ENCODE measurements at regions of chr2 and their contacts with region 1.

Region 1: DNA sequence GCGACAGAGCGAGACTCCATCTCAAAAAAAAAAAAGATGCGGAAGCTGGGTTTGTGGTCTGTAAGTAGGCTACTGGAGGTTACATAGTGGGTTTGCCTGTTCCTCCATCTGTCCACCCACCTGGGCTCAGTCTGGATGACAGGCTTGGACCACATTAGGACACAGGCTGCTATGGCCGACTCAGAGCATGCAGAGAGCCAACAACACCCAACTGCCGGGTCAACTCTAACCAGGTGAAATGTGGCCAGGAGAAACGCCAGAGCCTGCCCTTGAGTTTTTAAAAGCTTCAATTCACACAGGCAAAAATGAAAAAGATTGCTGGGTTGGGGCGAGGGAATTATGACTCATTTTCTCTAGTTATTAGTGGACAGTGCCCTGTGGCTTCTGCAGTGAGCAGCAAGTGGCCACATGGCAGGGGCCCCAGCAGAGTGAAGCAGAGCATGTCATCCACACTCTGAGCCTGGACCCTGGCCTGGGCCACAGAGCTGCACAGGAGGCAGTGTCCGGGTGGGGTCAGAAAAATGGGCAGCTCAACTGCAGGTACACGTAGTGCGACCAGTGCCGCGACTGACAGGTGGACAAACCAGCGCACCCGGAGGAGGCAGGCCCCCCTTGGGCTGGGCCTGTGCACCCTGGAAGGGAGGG is 67.4 kb downstream of the BIN1 start:
- DNase-seq: no peak
- H3K4me3 ChIP-seq: no peak overlapping the region
- H3K27ac ChIP-seq: no peak overlapping the region
- H3K4me1 ChIP-seq: no peaks in the 10 kb centered on the region
- H3K27me3 ChIP-seq: no peaks in the 10 kb centered on the region
- CTCF ChIP-seq: no peak

Region 2: DNA sequence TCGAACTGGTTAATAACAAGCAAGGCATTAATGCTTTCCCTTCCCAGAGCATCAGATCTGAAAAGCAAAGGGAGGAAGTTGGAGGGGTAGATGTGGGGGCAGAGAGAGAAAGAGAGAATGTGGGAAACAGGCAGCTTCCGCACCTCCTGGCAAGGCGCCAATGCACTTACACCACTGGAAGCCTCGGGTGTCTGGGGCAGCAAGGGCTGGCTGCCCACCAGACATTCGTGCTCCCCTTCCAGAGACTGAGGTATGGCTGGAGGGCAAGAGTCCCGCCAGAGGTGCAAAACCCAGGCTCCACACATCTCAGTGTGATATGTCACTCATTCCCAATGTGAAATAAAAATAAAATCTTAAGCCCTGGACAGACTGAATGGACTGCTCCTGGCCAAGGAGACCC is 94.4 kb before region 1 on chr2:
- CTCF ChIA-PET with region 1: no interaction called
- dilution Hi-C with region 1: no loop called
- in situ Hi-C with region 1: no loop called
- intact Hi-C with region 1: no loop called
- DNase-seq: no peak
- H3K4me3 ChIP-seq: no peak overlapping the region
- H3K27ac ChIP-seq: no peak overlapping the region
- H3K4me1 ChIP-seq: no peaks in the 10 kb centered on the region
- H3K27me3 ChIP-seq: no peaks in the 10 kb centered on the region
- CTCF ChIP-seq: no peak

Region 3: GRCh38 chr2:126986631-126987187 is 52.8 kb before region 1 on chr2:
- CTCF ChIA-PET with region 1: no interaction called
- dilution Hi-C with region 1: loop called (anchors 5 kb)
- in situ Hi-C with region 1: no loop called
- intact Hi-C with region 1: no loop called
- DNase-seq: no peak
- H3K4me3 ChIP-seq: no peak overlapping the region
- H3K27ac ChIP-seq: no peak overlapping the region
- H3K4me1 ChIP-seq: no peaks in the 10 kb centered on the region
- H3K27me3 ChIP-seq: no peaks in the 10 kb centered on the region
- CTCF ChIP-seq: no peak